ENCODE measurements at regions of chr5 and their contacts with region 1.

Region 1: GRCh38 chr5:148998174-148998797 is 64.6 kb downstream of the SH3TC2 start:
- DNase-seq: no peak
- H3K4me3 ChIP-seq: no peak overlapping the region
- H3K27ac ChIP-seq: no peak overlapping the region
- H3K4me1 ChIP-seq: peaks cover 0 to 30% (median 7%) of the 10 kb centered on the region in 3 donors
- H3K27me3 ChIP-seq: no peaks in the 10 kb centered on the region
- CTCF ChIP-seq: peak; percentile 43 to 81 (median 66)
- POLR2A ChIP-seq: no peak

Region 2: GRCh38 chr5:148730943-148731861 is 267.1 kb before region 1 on chr5:
- intact Hi-C with region 1: loop called (anchors 10 kb)
- DNase-seq: no peak
- H3K4me3 ChIP-seq: peak overlapping the region in 1 of 4 donors; percentile 34
- H3K27ac ChIP-seq: peak overlapping the region in 2 of 4 donors; percentile 10 to 22
- H3K4me1 ChIP-seq: peaks cover 0 to 23% (median 11%) of the 10 kb centered on the region in 3 donors
- H3K27me3 ChIP-seq: no peaks in the 10 kb centered on the region
- CTCF ChIP-seq: peak; percentile 66 to 89 (median 88)
- POLR2A ChIP-seq: no peak

Region 3: GRCh38 chr5:148826053-148826738 is 172.1 kb before region 1 on chr5 and contains the start of gene ADRB2:
- intact Hi-C with region 1: loop called (anchors 10 kb)
- DNase-seq: peak; percentile 86
- H3K4me3 ChIP-seq: peak within 1 kb of the TSS; percentile 43 to 71 (median 68)
- H3K27ac ChIP-seq: peak within 1 kb of the TSS; percentile 91 to 93 (median 92)
- H3K4me1 ChIP-seq: peaks cover 12 to 61% (median 14%) of the 10 kb centered on the region in 3 donors
- H3K27me3 ChIP-seq: no peaks in the 10 kb centered on the region
- CTCF ChIP-seq: peak in 3 of 6 experiments; percentile 3 to 8 (median 4)
- POLR2A ChIP-seq: peak in 3 of 4 donors; percentile 93 to 99 (median 98)
- total RNA-seq, gene ADRB2: 10.2 to 19.5 (median 11.9) TPM

Region 4: DNA sequence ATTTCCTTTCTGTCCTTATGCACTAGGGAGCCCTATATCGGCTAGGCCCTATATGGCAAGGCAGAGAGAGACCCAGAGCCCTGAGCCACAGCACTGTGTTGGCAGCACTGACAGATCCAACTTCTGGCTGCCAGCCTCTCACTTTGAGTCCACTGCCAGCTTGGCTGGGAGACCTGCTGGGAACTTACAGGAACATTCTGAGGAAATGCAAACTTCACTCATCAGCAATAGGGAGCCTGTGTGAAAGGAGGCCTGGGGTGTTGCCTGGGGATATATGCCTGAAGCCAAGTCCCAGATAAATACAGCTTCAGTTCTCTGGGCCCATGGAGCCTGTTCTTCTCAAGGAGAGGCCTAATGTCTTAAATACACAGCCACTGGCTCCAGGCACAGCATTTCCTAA is 93.8 kb before region 1 on chr5:
- intact Hi-C with region 1: loop called (anchors 10 kb)
- DNase-seq: no peak
- H3K4me3 ChIP-seq: no peak overlapping the region
- H3K27ac ChIP-seq: peak overlapping the region in 3 of 4 donors; percentile 16 to 69 (median 27)
- H3K4me1 ChIP-seq: peaks cover 0 to 26% (median 9%) of the 10 kb centered on the region in 3 donors
- H3K27me3 ChIP-seq: no peaks in the 10 kb centered on the region
- CTCF ChIP-seq: no peak
- POLR2A ChIP-seq: no peak

Region 5: GRCh38 chr5:149114403-149115312 is 116.4 kb after region 1 on chr5:
- intact Hi-C with region 1: no loop called
- DNase-seq: no peak
- H3K4me3 ChIP-seq: no peak overlapping the region
- H3K27ac ChIP-seq: peak overlapping the region in 3 of 4 donors; percentile 4 to 62 (median 61)
- H3K4me1 ChIP-seq: peaks cover 4 to 22% (median 5%) of the 10 kb centered on the region in 3 donors
- H3K27me3 ChIP-seq: no peaks in the 10 kb centered on the region
- CTCF ChIP-seq: peak; percentile 23 to 90 (median 68)
- POLR2A ChIP-seq: no peak

Measured in esophagus squamous epithelium (tissue), 5 donors.